Endothelial cell of umbilical vein (primary cell): ENCODE measurements at regions of chr14 and their contacts with region 1.

Region 1: GRCh38 chr14:49796025-49796424 is 28.1 kb downstream of the KLHDC2 start:
- DNase-seq: no peak
- H3K4me3 ChIP-seq: no peak overlapping the region
- H3K27ac ChIP-seq: no peak overlapping the region
- H3K4me1 ChIP-seq: no peaks in the 10 kb centered on the region
- H3K27me3 ChIP-seq: no peaks in the 10 kb centered on the region
- CTCF ChIP-seq: no peak
- POLR2A ChIP-seq: no peak

Region 2: DNA sequence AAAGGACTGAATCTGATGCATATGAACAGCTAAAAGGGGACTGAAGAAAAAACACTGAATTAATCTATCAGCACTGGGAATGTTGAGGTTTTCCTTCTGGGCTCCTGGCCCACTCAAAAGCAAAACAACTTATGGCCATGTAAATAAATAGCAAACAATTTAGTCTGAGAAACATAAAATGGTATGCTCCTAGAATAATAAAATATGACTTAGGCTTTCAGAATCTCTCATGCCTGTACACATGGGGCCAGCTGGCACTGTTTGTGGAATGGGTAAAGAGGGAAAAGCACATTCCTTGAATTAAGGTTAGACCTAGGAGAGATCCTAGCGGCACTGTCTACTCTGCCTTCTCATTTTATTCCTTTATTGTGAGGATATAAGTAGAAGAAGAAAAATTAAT is 21.9 kb before region 1 on chr14:
- CTCF ChIA-PET with region 1: no interaction called
- POLR2A ChIA-PET with region 1: interaction called, 10 read pairs
- dilution Hi-C with region 1: no loop called
- intact Hi-C with region 1: no loop called
- DNase-seq: no peak
- H3K4me3 ChIP-seq: no peak overlapping the region
- H3K27ac ChIP-seq: no peak overlapping the region
- H3K4me1 ChIP-seq: peaks cover 6% of the 10 kb centered on the region
- H3K27me3 ChIP-seq: no peaks in the 10 kb centered on the region
- CTCF ChIP-seq: no peak
- POLR2A ChIP-seq: no peak